OCI-LY7 (cell line): ENCODE measurements at regions of chr7 and their contacts with region 1.

Region 1: GRCh38 chr7:909358-910329 is 33.3 kb downstream of the GET4 start:
- DNase-seq: peak; percentile 64
- H3K4me3 ChIP-seq: peak overlapping the region; percentile 21
- H3K27ac ChIP-seq: no peak overlapping the region
- H3K4me1 ChIP-seq: peaks cover 15% of the 10 kb centered on the region
- CTCF ChIP-seq: no peak

Region 2: GRCh38 chr7:842431-843031 is 67.1 kb before region 1 on chr7:
- CTCF ChIA-PET with region 1: no interaction called
- POLR2A ChIA-PET with region 1: no interaction called
- intact Hi-C with region 1: no loop called
- DNase-seq: no peak
- H3K4me3 ChIP-seq: no peak overlapping the region
- H3K27ac ChIP-seq: no peak overlapping the region
- H3K4me1 ChIP-seq: no peaks in the 10 kb centered on the region
- CTCF ChIP-seq: no peak

Region 3: DNA sequence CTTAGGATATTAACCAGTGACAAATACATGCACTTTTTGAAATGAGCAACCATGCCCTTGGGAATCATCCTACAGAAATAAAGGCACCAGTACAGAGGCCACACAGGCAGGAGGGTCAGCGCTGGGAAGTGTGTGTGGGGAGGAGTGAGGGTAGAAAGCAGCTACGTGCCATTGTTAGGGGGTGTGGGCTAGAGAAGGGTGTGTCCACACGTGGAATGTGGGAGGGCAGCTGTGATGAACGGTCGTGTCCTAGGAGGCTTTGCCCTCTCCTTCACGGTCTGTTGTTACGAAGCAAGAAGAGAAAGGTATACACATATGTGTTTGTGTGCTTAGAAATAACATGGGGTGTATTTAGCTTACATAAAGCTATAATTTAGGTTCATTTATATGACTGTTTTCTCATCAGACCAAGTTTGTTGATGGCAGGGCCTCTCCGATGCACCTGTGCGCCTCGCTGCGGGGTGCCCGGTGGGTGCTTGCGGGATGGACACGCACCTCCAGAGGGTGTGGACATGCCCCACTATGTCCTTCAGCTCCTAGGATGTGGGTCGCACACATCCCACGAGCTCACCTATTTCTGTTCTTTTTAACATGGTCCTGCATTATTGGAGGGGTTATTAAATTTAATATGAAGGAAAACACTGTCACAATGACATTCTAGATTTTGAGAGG is 50.1 kb before region 1 on chr7:
- CTCF ChIA-PET with region 1: no interaction called
- POLR2A ChIA-PET with region 1: no interaction called
- intact Hi-C with region 1: no loop called
- DNase-seq: no peak
- H3K4me3 ChIP-seq: no peak overlapping the region
- H3K27ac ChIP-seq: no peak overlapping the region
- H3K4me1 ChIP-seq: no peaks in the 10 kb centered on the region
- CTCF ChIP-seq: no peak

Region 4: GRCh38 chr7:954330-955238 is 44.9 kb after region 1 on chr7 and contains the start of gene ADAP1:
- CTCF ChIA-PET with region 1: interaction called, 5 read pairs
- POLR2A ChIA-PET with region 1: interaction called, 3 read pairs
- intact Hi-C with region 1: loop called (anchors 5 kb)
- DNase-seq: peak; percentile 52
- H3K4me3 ChIP-seq: no peak within 1 kb of the TSS
- H3K27ac ChIP-seq: no peak within 1 kb of the TSS
- H3K4me1 ChIP-seq: peaks cover 22% of the 10 kb centered on the region
- CTCF ChIP-seq: no peak
- total RNA-seq, gene ADAP1: 0.41 and 2.4 TPM in 2 replicates

Region 5: GRCh38 chr7:974820-975681 is 65.4 kb after region 1 on chr7 and contains the start of gene COX19:
- CTCF ChIA-PET with region 1: no interaction called
- POLR2A ChIA-PET with region 1: no interaction called
- intact Hi-C with region 1: loop called (anchors 2 kb)
- DNase-seq: peak; percentile 94
- H3K4me3 ChIP-seq: peak within 1 kb of the TSS; percentile 100
- H3K27ac ChIP-seq: peak within 1 kb of the TSS; percentile 73
- H3K4me1 ChIP-seq: peaks cover 74% of the 10 kb centered on the region
- CTCF ChIP-seq: no peak
- total RNA-seq, gene COX19: 20.3 and 23.2 TPM in 2 replicates

Region 6: DNA sequence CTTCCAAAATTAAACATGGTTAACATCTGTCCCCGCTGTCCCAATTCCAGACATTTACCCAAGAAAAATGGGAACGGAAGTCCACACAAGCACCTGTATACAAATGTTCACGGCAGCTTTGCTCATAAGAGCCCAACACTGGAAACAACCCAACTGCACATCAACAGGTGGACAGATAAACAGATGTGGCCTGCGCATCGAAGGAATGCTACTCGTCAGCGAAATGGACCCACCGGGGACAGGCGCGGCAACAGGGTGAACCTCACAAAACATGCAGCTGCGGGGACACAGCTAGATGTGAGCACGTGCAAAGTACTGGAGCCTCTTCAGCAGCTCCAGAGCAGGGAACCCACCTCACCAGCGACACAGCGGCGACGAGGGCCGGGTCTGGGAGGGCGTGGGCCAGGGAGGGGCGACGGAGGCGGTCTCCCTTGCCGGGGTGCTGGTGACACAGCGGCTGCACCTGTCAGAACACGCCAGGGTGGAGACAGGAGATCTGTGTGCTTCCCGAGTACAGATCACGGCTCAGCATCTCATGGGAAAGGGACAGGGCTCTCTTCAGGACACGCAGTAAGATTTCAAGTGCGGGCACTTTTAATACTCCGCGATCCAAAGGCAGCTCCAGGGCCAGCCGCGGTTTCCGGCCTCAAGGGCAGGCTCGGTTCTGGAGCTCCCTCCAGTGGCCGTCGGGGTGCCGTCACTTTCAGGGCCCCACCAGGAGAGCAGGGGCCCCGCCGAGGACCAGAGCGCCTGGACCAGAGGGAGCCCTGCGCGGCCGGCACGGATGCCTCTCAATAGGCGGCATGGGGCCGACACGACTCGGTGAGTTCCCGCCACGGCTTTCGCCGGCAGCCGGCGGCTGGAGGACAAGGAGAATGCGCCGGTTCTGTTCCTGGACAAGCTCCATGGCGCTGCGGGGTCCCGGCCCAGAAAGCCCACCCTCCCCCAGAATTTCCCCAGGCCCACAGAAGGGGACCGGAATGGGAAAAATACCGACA is 155.9 kb after region 1 on chr7:
- CTCF ChIA-PET with region 1: no interaction called
- POLR2A ChIA-PET with region 1: no interaction called
- intact Hi-C with region 1: loop called (anchors 2 kb)
- DNase-seq: peak; percentile 80
- H3K4me3 ChIP-seq: peak overlapping the region; percentile 38
- H3K27ac ChIP-seq: no peak overlapping the region
- H3K4me1 ChIP-seq: peaks cover 51% of the 10 kb centered on the region
- CTCF ChIP-seq: peak; percentile 88

Region 7: GRCh38 chr7:1175967-1176851 is 266.6 kb after region 1 on chr7:
- CTCF ChIA-PET with region 1: no interaction called
- POLR2A ChIA-PET with region 1: no interaction called
- intact Hi-C with region 1: loop called (anchors 1 kb)
- DNase-seq: peak; percentile 83
- H3K4me3 ChIP-seq: peak overlapping the region; percentile 33
- H3K27ac ChIP-seq: no peak overlapping the region
- H3K4me1 ChIP-seq: peaks cover 12% of the 10 kb centered on the region
- CTCF ChIP-seq: peak; percentile 91

Region 8: DNA sequence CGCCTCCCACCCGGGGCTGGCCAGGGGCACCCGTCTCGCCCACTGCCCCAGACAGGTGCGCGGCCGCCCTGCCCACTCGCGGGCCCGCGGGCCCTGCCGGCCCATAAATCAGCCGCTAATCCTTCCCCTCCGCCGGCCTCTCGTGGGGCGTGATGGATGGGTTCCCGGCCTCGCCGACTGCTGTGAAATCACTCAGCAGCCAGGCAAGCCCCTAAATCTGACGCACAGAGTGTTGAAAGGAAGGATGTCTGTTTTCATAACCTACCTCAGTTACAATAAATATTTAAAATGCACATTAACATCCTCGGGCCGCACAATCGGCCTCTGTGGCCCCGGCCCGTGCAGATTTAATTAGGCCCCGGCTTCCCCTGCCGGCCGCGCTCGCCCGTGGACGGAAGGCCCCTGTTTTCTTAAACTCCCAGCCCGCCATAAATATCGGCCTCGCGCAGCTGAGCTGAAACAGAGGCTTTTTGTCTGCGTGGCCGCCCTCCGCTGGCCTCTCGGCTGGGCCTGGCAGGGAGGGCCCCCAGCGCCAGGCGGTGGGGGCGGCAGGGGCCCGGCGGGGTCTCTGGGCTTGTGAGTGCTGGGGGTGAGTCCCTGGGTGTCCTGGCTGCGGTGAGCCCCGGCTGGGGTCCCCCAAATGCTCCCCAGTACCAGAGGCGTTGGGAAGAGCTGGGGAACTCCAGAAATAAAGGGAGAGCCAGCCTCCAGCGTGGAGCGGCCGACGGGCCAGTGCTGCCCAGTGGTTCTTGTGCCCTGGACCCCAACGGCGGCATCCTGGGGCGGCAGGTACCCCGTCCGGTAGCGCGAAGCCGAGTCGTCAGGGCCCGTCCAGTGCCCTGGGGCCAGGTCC is 413.8 kb after region 1 on chr7:
- CTCF ChIA-PET with region 1: no interaction called
- POLR2A ChIA-PET with region 1: no interaction called
- intact Hi-C with region 1: no loop called
- DNase-seq: no peak
- H3K4me3 ChIP-seq: no peak overlapping the region
- H3K27ac ChIP-seq: no peak overlapping the region
- H3K4me1 ChIP-seq: no peaks in the 10 kb centered on the region
- CTCF ChIP-seq: no peak